PC-3 (cell line): ENCODE measurements at regions of chr12 and their contacts with region 1.

Region 1: GRCh38 chr12:115354007-115354452 is 670.1 kb upstream of the TBX3 start:
- DNase-seq: peak; percentile 98
- ATAC-seq: peak; percentile 94
- H3K4me3 ChIP-seq: peak overlapping the region; percentile 68
- H3K27ac ChIP-seq: peak overlapping the region; percentile 94
- H3K4me1 ChIP-seq: peaks cover 23% of the 10 kb centered on the region
- H3K27me3 ChIP-seq: no peaks in the 10 kb centered on the region
- CTCF ChIP-seq: no peak

Region 2: GRCh38 chr12:115341442-115341841 is 12.6 kb before region 1 on chr12:
- CTCF ChIA-PET with region 1: no interaction called
- POLR2A ChIA-PET with region 1: no interaction called
- intact Hi-C with region 1: loop called (anchors 1 kb)
- DNase-seq: peak; percentile 99
- ATAC-seq: peak; percentile 79
- H3K4me3 ChIP-seq: no peak overlapping the region
- H3K27ac ChIP-seq: peak overlapping the region; percentile 90
- H3K4me1 ChIP-seq: peaks cover 45% of the 10 kb centered on the region
- H3K27me3 ChIP-seq: no peaks in the 10 kb centered on the region
- CTCF ChIP-seq: no peak

Region 3: GRCh38 chr12:115521771-115522409 is 167.9 kb after region 1 on chr12:
- CTCF ChIA-PET with region 1: no interaction called
- POLR2A ChIA-PET with region 1: no interaction called
- intact Hi-C with region 1: no loop called
- DNase-seq: no peak
- ATAC-seq: no peak
- H3K4me3 ChIP-seq: no peak overlapping the region
- H3K27ac ChIP-seq: no peak overlapping the region
- H3K4me1 ChIP-seq: no peaks in the 10 kb centered on the region
- H3K27me3 ChIP-seq: no peaks in the 10 kb centered on the region
- CTCF ChIP-seq: no peak